CD8-positive, alpha-beta T cell (primary cell): ENCODE measurements at regions of chr2 and their contacts with region 1.

Region 1: GRCh38 chr2:43977677-43978375 is 18.0 kb downstream of the LRPPRC start:
- DNase-seq: no peak
- ATAC-seq: no peak
- H3K4me3 ChIP-seq: no peak overlapping the region
- H3K4me3 Mint-ChIP-seq: no peak overlapping the region
- H3K27ac ChIP-seq: no peak overlapping the region
- H3K27ac Mint-ChIP-seq: no peak overlapping the region
- H3K4me1 ChIP-seq: no peaks in the 10 kb centered on the region
- H3K4me1 Mint-ChIP-seq: peaks cover 1% of the 10 kb centered on the region
- H3K27me3 ChIP-seq: no peaks in the 10 kb centered on the region
- H3K27me3 Mint-ChIP-seq: no peaks in the 10 kb centered on the region
- CTCF ChIP-seq: no peak

Region 2: DNA sequence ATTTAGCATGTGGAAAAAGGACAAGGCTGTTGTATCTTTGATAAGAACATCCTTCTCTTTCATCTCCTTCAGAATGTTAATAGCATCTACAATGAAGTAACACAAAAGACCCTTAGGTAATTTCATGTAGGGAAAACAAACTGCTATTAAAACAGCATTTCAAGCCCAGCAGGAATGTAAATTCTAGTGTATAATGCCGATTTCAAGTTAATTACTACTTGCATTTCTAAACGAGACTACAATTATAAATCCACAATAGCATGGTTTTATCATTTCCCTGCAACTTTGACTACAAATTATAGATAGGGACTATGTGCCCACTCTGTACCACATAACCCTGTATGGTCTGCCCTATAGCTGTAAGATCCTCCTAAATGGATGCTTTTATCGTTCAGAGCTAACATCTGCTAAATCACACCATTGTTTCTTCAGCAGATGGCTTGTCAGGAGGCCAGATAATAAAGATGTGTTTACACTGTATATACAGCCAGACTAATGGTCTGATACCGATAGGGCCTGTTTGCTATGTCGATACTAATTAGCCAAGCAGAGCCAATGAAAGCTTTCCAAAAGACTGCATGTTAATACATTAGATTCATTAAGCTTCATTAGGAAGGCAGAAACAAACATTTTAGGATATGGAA is 33.9 kb before region 1 on chr2:
- CTCF ChIA-PET with region 1: no interaction called
- POLR2A ChIA-PET with region 1: interaction called, 4 read pairs
- intact Hi-C with region 1: loop called in 1 of 2 experiments (anchors 5 kb)
- DNase-seq: no peak
- ATAC-seq: no peak
- H3K4me3 ChIP-seq: no peak overlapping the region
- H3K4me3 Mint-ChIP-seq: no peak overlapping the region
- H3K27ac ChIP-seq: no peak overlapping the region
- H3K27ac Mint-ChIP-seq: no peak overlapping the region
- H3K4me1 ChIP-seq: no peaks in the 10 kb centered on the region
- H3K4me1 Mint-ChIP-seq: no peaks in the 10 kb centered on the region
- H3K27me3 ChIP-seq: no peaks in the 10 kb centered on the region
- H3K27me3 Mint-ChIP-seq: no peaks in the 10 kb centered on the region
- CTCF ChIP-seq: no peak

Region 3: DNA sequence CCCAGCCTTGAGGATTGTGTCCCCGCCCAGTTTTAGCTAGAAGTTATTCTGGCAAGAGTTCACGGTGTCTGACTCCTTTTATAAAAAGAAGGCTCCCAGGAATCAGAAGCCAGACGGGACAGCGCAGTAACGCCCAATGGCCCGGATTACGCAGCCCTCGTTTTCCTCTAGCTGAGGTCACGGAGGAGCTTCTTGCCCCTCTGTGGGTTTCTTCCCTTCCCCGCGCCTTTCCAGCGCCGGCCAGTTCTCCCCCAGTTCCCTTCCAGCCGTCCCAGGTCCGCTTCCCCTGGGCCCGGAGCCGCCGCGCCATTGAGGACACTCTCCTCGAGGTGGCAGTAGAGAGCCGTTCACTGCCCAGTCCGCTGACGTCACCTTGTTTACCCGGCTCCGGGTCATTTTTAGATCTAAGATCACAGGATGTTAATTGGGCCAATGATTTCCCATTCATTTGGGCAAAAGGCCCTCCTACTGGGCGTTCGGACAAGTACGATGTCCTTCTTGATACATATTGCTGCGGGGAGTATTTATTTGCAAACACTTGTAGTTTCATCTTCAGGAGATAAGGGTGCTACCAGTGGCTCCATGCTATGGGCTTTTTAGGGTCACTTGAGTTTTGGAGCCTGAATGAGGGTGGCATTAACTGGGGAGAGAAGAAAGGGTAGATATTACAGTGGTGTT is 109.3 kb after region 1 on chr2:
- CTCF ChIA-PET with region 1: no interaction called
- POLR2A ChIA-PET with region 1: no interaction called
- intact Hi-C with region 1: no loop called
- DNase-seq: peak; percentile 68 to 91 (median 84)
- ATAC-seq: peak; percentile 98
- H3K4me3 ChIP-seq: peak overlapping the region; percentile 53 to 56
- H3K4me3 Mint-ChIP-seq: peak overlapping the region; percentile 87
- H3K27ac ChIP-seq: peak overlapping the region; percentile 58 to 64
- H3K27ac Mint-ChIP-seq: peak overlapping the region; percentile 94
- H3K4me1 ChIP-seq: peaks cover 9% of the 10 kb centered on the region
- H3K4me1 Mint-ChIP-seq: peaks cover 16% of the 10 kb centered on the region
- H3K27me3 ChIP-seq: no peaks in the 10 kb centered on the region
- H3K27me3 Mint-ChIP-seq: no peaks in the 10 kb centered on the region
- CTCF ChIP-seq: peak; percentile 90